CD8-positive, alpha-beta memory T cell (primary cell): ENCODE measurements at regions of chr11 and their contacts with region 1.

Region 1: DNA sequence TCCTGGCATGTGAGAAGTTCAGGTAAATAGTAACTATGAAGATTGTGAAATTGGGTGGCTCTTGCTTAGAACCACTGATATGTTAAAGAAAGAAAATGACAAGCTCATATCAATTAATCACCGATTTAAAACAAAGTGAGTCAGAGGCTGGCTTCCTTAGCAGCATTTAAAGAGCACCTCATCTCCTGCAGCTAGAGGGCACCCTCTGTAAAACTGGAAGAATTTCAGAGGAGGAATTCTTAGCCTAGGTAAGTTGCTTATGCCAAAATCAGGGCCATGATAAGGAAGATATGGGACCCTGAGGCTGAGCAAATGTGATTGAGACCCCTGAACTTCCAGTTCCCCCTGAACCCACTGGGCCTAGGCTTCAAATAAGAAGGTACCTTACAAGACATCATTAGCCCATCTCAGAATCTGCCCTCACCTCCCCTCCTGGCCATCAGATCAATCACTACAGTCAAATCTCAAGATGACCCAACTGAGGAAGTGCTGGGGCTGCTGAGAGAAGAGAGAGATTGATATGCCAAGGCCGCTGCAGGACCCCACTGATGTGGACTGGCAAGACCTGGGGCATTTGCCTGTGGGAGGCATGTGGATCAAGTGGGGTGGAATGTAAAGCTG is 8.6 kb upstream of the CD3E start:
- DNase-seq: peak in 3 of 5 donors; percentile 45 to 68 (median 53)
- H3K4me3 ChIP-seq: no peak overlapping the region
- H3K4me3 Mint-ChIP-seq: no peak overlapping the region
- H3K27ac ChIP-seq: no peak overlapping the region
- H3K27ac Mint-ChIP-seq: peak overlapping the region; percentile 34 to 85 (median 74)
- H3K4me1 ChIP-seq: peaks cover 8% of the 10 kb centered on the region
- H3K4me1 Mint-ChIP-seq: peaks cover 12 to 20% (median 17%) of the 10 kb centered on the region in 3 donors
- H3K27me3 ChIP-seq: no peaks in the 10 kb centered on the region
- H3K27me3 Mint-ChIP-seq: no peaks in the 10 kb centered on the region

Region 2: GRCh38 chr11:117796872-117797529 is 498.9 kb before region 1 on chr11 and contains the start of gene DSCAML1:
- CTCF ChIA-PET with region 1: no interaction called
- POLR2A ChIA-PET with region 1: no interaction called
- DNase-seq: peak in 2 of 5 donors; percentile 28 to 65
- H3K4me3 ChIP-seq: peak within 1 kb of the TSS; percentile 12
- H3K4me3 Mint-ChIP-seq: peak within 1 kb of the TSS; percentile 21 to 88 (median 65)
- H3K27ac ChIP-seq: no peak within 1 kb of the TSS
- H3K27ac Mint-ChIP-seq: peak within 1 kb of the TSS in 1 of 8 donors; percentile 22
- H3K4me1 ChIP-seq: peaks cover 18% of the 10 kb centered on the region
- H3K4me1 Mint-ChIP-seq: peaks cover 0 to 22% (median 14%) of the 10 kb centered on the region in 3 donors
- H3K27me3 ChIP-seq: peaks cover 42% of the 10 kb centered on the region
- H3K27me3 Mint-ChIP-seq: peaks cover 47 to 52% of the 10 kb centered on the region in 2 donors
- total RNA-seq, gene DSCAML1: 0.48 to 0.91 TPM

Region 3: DNA sequence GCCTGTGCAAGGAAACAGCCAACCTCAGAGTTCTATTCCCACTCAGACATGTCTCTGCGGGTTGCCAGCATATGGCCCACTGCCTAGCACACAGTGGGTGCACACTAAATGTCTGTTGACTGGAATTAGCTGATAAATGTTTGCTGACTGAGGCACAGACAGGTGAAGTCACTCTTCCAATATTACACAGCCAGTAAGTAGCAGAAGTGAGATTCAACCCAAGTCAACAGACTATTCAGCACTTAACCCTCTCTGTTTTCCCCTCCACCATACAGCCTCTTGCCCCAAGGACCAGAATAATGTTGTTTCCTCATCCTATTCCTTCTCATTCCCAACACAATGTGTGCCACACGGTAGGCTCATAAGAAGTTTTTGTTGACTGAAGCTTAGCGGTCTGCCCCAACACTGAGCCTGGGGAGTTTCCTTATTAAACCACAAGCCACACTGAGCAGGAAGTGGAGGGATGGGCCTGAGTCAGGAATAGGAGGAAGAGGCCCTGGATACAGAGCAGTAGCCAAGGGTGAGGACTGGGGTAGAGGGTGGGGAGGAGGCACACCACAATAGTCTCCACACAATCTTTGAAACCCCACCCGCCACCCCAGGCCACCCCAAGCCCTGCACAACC is 325.4 kb before region 1 on chr11:
- CTCF ChIA-PET with region 1: no interaction called
- POLR2A ChIA-PET with region 1: no interaction called
- DNase-seq: peak in 3 of 5 donors; percentile 14 to 60 (median 39)
- H3K4me3 ChIP-seq: peak overlapping the region; percentile 22
- H3K4me3 Mint-ChIP-seq: peak overlapping the region; percentile 8 to 77 (median 67)
- H3K27ac ChIP-seq: no peak overlapping the region
- H3K27ac Mint-ChIP-seq: peak overlapping the region; percentile 75 to 93 (median 88)
- H3K4me1 ChIP-seq: peaks cover 60% of the 10 kb centered on the region
- H3K4me1 Mint-ChIP-seq: peaks cover 61 to 73% (median 69%) of the 10 kb centered on the region in 3 donors
- H3K27me3 ChIP-seq: no peaks in the 10 kb centered on the region
- H3K27me3 Mint-ChIP-seq: no peaks in the 10 kb centered on the region

Region 4: GRCh38 chr11:118310271-118310670 is 14.3 kb after region 1 on chr11:
- CTCF ChIA-PET with region 1: interaction called, 26 read pairs
- POLR2A ChIA-PET with region 1: no interaction called
- DNase-seq: no peak
- H3K4me3 ChIP-seq: no peak overlapping the region
- H3K4me3 Mint-ChIP-seq: peak overlapping the region; percentile 5 to 62 (median 27)
- H3K27ac ChIP-seq: no peak overlapping the region
- H3K27ac Mint-ChIP-seq: peak overlapping the region; percentile 13 to 89 (median 80)
- H3K4me1 ChIP-seq: peaks cover 79% of the 10 kb centered on the region
- H3K4me1 Mint-ChIP-seq: peaks cover 84 to 91% (median 90%) of the 10 kb centered on the region in 3 donors
- H3K27me3 ChIP-seq: no peaks in the 10 kb centered on the region
- H3K27me3 Mint-ChIP-seq: no peaks in the 10 kb centered on the region

Region 5: DNA sequence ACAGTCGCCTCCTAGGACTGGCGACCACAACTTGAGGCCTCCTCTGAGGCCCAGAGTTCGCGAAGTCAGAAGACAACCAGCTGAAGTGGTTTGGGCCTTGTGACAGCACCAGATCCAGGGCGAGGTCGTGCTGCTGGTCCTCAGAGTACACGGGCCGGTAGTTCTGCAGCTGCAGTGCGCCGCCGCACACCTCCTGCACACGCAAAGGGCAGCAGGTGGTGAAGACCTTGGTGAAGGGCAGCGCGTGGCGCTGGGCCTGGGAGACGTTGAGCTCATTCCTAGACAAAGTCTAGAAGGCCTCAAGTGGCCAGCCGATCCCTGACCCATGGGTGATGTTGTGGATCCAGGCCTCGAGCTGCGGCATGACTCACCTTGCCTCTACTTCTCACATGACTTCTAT is 26.8 kb after region 1 on chr11:
- CTCF ChIA-PET with region 1: interaction called, 4 read pairs
- POLR2A ChIA-PET with region 1: interaction called, 11 read pairs
- DNase-seq: no peak
- H3K4me3 ChIP-seq: no peak overlapping the region
- H3K4me3 Mint-ChIP-seq: no peak overlapping the region
- H3K27ac ChIP-seq: no peak overlapping the region
- H3K27ac Mint-ChIP-seq: no peak overlapping the region
- H3K4me1 ChIP-seq: peaks cover 43% of the 10 kb centered on the region
- H3K4me1 Mint-ChIP-seq: peaks cover 51 to 70% (median 55%) of the 10 kb centered on the region in 3 donors
- H3K27me3 ChIP-seq: no peaks in the 10 kb centered on the region
- H3K27me3 Mint-ChIP-seq: no peaks in the 10 kb centered on the region

Region 6: GRCh38 chr11:118530408-118531339 is 234.7 kb after region 1 on chr11 and contains the start of gene TMEM25:
- CTCF ChIA-PET with region 1: no interaction called
- POLR2A ChIA-PET with region 1: no interaction called
- DNase-seq: peak; percentile 52 to 81 (median 66)
- H3K4me3 ChIP-seq: peak within 1 kb of the TSS; percentile 70
- H3K4me3 Mint-ChIP-seq: peak within 1 kb of the TSS; percentile 92 to 97 (median 95)
- H3K27ac ChIP-seq: peak within 1 kb of the TSS; percentile 67
- H3K27ac Mint-ChIP-seq: peak within 1 kb of the TSS; percentile 64 to 96 (median 89)
- H3K4me1 ChIP-seq: peaks cover 23% of the 10 kb centered on the region
- H3K4me1 Mint-ChIP-seq: peaks cover 28 to 52% (median 33%) of the 10 kb centered on the region in 3 donors
- H3K27me3 ChIP-seq: no peaks in the 10 kb centered on the region
- H3K27me3 Mint-ChIP-seq: peaks cover 0 to 3% of the 10 kb centered on the region in 2 donors
- total RNA-seq, gene TMEM25: 7.0 to 8.3 TPM